A673 (cell line): ENCODE measurements at regions of chr20 and their contacts with region 1.

Region 1: DNA sequence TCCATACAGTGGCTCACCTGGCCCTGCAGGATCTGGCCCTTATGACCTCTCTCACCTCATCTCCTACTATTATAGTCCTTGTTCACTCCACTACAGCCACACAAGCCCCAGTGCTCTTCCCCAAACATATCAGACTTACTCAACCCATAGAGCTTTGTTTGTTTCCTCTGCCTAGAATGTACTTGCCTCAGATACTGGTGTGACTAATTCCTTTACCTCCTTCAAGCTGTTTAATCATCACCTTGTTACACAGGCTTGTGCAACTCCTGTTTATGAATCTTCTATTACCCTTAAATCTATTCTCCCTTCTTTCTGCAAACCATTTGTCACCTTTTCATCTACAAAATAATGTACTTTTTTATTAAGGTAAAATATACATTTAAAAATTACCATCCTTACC is 3.2 kb downstream of the DEFB125 start:
- DNase-seq: no peak
- H3K4me3 ChIP-seq: no peak overlapping the region
- H3K27ac ChIP-seq: no peak overlapping the region
- H3K4me1 ChIP-seq: no peaks in the 10 kb centered on the region
- H3K27me3 ChIP-seq: peaks cover 50% of the 10 kb centered on the region
- CTCF ChIP-seq: no peak

Region 2: GRCh38 chr20:64766-65322 is 25.8 kb before region 1 on chr20:
- CTCF ChIA-PET with region 1: no interaction called
- POLR2A ChIA-PET with region 1: no interaction called
- intact Hi-C with region 1: no loop called
- DNase-seq: no peak
- H3K4me3 ChIP-seq: no peak overlapping the region
- H3K27ac ChIP-seq: no peak overlapping the region
- H3K4me1 ChIP-seq: no peaks in the 10 kb centered on the region
- H3K27me3 ChIP-seq: peaks cover 19% of the 10 kb centered on the region
- CTCF ChIP-seq: no peak

Region 3: DNA sequence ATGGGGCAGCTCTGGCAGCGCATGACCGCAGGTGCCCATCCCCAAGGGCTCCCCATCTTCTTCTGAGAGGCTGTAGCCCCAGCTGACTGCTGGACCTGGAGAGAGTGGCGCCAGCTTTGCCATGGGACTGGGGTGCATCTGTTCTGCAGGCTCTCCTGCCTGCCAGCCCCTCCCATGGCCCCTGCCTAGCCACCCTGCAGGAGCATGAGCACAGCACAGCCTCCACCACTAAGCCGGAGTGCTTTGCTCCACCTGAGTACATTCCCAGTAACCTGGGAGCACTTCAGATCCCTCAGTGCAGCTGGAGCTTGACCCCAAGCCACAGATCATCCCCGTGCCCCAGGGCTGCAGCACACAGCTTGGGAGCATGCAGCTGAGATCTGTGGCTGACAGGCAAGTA is 12.8 kb after region 1 on chr20:
- CTCF ChIA-PET with region 1: no interaction called
- POLR2A ChIA-PET with region 1: no interaction called
- intact Hi-C with region 1: loop called (anchors 2 kb)
- DNase-seq: no peak
- H3K4me3 ChIP-seq: no peak overlapping the region
- H3K27ac ChIP-seq: no peak overlapping the region
- H3K4me1 ChIP-seq: no peaks in the 10 kb centered on the region
- H3K27me3 ChIP-seq: peaks cover 58% of the 10 kb centered on the region
- CTCF ChIP-seq: no peak

Region 4: GRCh38 chr20:462199-462991 is 371.7 kb after region 1 on chr20 and contains the start of gene TBC1D20:
- CTCF ChIA-PET with region 1: no interaction called
- POLR2A ChIA-PET with region 1: no interaction called
- intact Hi-C with region 1: no loop called
- DNase-seq: peak; percentile 94
- H3K4me3 ChIP-seq: peak within 1 kb of the TSS; percentile 91
- H3K27ac ChIP-seq: peak within 1 kb of the TSS; percentile 91
- H3K4me1 ChIP-seq: peaks cover 15% of the 10 kb centered on the region
- H3K27me3 ChIP-seq: no peaks in the 10 kb centered on the region
- CTCF ChIP-seq: peak; percentile 44
- total RNA-seq, gene TBC1D20: 31.8 and 34.3 TPM in 2 replicates